Endothelial cell of umbilical vein (primary cell): ENCODE measurements at regions of chr9 and their contacts with region 1.

Region 1: DNA sequence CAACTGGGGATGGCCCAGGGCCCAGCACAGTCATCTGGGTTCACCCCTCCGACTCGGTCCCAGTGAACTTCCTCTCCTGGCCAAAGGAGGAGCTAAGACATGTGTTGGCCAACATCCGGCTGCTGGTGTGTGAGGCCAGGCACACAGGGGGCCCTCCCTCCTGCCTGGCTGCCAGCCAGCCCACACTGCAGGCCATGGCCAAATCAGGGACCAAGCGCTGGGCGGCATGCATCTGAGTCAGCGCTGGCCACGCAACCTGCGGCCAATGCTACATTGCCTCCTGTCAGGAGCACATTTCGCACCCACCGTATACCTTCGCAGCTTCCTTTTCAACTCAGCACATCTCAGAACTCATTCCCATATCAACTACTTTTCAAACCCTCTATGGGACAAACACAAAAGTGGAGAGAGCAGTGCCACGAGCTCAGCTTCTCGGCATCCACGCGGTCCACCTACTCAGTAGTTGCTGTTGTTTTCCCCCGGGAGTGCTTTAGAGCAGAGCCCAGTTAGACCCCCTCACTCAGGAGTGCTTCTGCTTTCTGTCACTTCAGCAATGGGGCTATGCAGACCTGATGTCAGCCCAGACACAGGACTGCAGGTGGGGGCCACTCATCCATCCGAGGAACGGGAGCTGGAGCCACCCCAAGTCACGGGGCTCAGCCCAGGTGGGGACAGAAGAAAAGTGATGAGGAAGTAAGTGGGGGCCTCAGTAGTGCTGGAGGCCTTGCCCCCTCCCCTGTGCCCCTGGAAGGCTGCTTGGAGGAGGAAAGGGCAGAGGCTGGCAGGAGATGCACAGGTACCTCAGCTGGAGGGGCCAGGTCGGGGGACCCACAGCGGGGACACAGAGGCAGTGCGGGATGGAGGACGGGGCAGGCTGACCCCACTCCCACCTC is 13.9 kb downstream of the NINJ1 start:
- DNase-seq: peak; percentile 80
- H3K4me3 ChIP-seq: no peak overlapping the region
- H3K27ac ChIP-seq: no peak overlapping the region
- H3K4me1 ChIP-seq: peaks cover 10% of the 10 kb centered on the region
- H3K27me3 ChIP-seq: no peaks in the 10 kb centered on the region
- CTCF ChIP-seq: peak in 1 of 2 donors; percentile 41
- POLR2A ChIP-seq: peak; percentile 30

Region 2: DNA sequence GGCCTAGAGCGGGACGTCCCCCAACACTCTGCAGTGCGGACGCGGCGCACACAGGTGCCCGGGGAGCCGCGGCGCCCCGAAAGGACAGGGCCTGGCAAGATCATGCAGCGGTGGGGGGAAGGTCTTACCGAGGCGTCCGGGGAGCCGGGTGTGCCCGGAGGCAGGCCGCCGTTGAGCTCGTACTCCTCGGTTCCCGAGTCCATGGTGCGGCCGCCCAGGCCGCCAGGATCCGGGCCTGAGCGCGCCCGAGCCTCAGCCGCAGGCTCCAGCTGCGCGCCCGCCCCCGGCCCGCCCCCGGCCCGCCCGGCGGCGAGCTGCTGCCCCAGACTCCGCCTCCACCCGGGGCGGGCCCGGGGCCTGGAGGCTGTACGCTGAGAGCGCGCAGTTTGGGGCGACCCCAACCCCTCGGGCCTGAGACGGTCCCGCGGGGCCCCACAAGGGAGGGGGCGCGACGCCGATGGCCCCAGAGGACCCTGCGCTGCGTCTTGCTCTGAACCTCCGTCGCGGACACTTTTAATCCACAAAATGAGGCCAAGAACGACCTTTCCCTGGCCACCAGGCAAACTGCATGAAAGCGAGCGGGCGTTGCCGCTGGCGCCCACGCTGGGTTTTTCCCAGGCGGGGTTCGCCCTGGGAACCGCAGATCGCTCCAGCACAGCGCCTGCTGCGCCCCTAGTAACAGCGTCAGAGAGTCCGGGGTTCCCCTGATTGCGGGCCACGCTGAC is 14.0 kb after region 1 on chr9 and contains the start of gene NINJ1:
- CTCF ChIA-PET with region 1: interaction called, 35 read pairs
- POLR2A ChIA-PET with region 1: interaction called, 11 read pairs
- dilution Hi-C with region 1: no loop called
- intact Hi-C with region 1: loop called (anchors 1 kb)
- DNase-seq: peak; percentile 83
- H3K4me3 ChIP-seq: peak within 1 kb of the TSS; percentile 54 to 63 (median 58)
- H3K27ac ChIP-seq: peak within 1 kb of the TSS; percentile 75
- H3K4me1 ChIP-seq: peaks cover 49% of the 10 kb centered on the region
- H3K27me3 ChIP-seq: no peaks in the 10 kb centered on the region
- CTCF ChIP-seq: peak in 1 of 2 donors; percentile 5
- POLR2A ChIP-seq: peak; percentile 77
- total RNA-seq, gene NINJ1: 31.5 and 42.2 TPM in 2 replicates

Region 3: GRCh38 chr9:93209097-93209496 is 88.9 kb after region 1 on chr9:
- CTCF ChIA-PET with region 1: no interaction called
- POLR2A ChIA-PET with region 1: no interaction called
- dilution Hi-C with region 1: no loop called
- intact Hi-C with region 1: no loop called
- DNase-seq: no peak
- H3K4me3 ChIP-seq: no peak overlapping the region
- H3K27ac ChIP-seq: no peak overlapping the region
- H3K4me1 ChIP-seq: no peaks in the 10 kb centered on the region
- H3K27me3 ChIP-seq: no peaks in the 10 kb centered on the region
- CTCF ChIP-seq: no peak
- POLR2A ChIP-seq: no peak

Region 4: GRCh38 chr9:93302551-93303257 is 182.5 kb after region 1 on chr9:
- CTCF ChIA-PET with region 1: interaction called, 11 read pairs
- POLR2A ChIA-PET with region 1: no interaction called
- dilution Hi-C with region 1: no loop called
- intact Hi-C with region 1: no loop called
- DNase-seq: peak; percentile 44
- H3K4me3 ChIP-seq: no peak overlapping the region
- H3K27ac ChIP-seq: no peak overlapping the region
- H3K4me1 ChIP-seq: no peaks in the 10 kb centered on the region
- H3K27me3 ChIP-seq: no peaks in the 10 kb centered on the region
- CTCF ChIP-seq: peak; percentile 53 to 82
- POLR2A ChIP-seq: no peak